Activated CD4-positive, alpha-beta T cell treated with anti-CD3 and anti-CD28 coated beads for 36 hours (primary cell): ENCODE measurements at regions of chr1 and their contacts with region 1.

Region 1: DNA sequence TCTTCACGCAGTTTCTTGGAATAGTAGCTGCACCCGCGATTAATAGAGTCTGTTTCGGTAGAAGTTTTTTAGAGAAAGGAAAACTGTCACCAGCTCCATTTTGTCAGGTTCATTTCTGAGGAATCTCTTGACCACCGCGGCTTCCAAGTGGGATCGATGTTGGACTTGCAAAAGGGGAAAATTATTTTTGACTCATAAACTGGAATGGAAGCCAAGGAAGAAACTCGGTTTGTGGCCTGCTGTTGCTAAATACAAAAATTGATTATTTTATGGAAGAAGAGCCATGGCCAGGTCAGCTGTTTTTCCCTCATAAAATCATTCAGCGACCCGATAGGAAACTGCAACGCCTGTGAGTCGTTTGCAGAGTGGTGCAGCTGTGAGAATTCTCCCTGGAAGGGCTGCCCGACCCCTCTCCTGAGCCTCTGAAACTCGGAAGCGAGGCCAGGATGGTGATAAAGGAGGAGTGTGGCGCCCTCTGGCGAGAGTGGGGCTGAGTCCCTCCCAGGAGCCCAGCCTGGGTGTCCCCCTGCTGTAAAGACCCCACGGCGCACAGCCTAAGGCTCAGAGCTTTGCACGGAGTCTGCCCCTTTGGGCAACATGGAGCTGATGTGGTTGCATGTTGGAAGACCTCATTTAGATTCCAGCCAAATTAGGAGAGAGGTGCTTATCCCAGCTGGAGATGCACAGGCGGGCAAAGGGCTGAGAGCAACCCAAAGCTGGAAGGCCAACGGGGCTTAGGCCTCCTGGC is 83.6 kb upstream of the SLC25A33 start:
- DNase-seq: peak; percentile 84
- ATAC-seq: peak; percentile 80
- H3K4me3 Mint-ChIP-seq: no peak overlapping the region
- H3K27ac Mint-ChIP-seq: no peak overlapping the region
- H3K4me1 Mint-ChIP-seq: no peaks in the 10 kb centered on the region
- H3K27me3 Mint-ChIP-seq: no peaks in the 10 kb centered on the region

Region 2: GRCh38 chr1:9269078-9269501 is 186.6 kb before region 1 on chr1:
- CTCF ChIA-PET with region 1: interaction called, 13 read pairs
- POLR2A ChIA-PET with region 1: no interaction called
- intact Hi-C with region 1: loop called (anchors 1 kb)
- DNase-seq: no peak
- ATAC-seq: no peak
- H3K4me3 Mint-ChIP-seq: no peak overlapping the region
- H3K27ac Mint-ChIP-seq: no peak overlapping the region
- H3K4me1 Mint-ChIP-seq: peaks cover 2% of the 10 kb centered on the region
- H3K27me3 Mint-ChIP-seq: no peaks in the 10 kb centered on the region

Region 3: DNA sequence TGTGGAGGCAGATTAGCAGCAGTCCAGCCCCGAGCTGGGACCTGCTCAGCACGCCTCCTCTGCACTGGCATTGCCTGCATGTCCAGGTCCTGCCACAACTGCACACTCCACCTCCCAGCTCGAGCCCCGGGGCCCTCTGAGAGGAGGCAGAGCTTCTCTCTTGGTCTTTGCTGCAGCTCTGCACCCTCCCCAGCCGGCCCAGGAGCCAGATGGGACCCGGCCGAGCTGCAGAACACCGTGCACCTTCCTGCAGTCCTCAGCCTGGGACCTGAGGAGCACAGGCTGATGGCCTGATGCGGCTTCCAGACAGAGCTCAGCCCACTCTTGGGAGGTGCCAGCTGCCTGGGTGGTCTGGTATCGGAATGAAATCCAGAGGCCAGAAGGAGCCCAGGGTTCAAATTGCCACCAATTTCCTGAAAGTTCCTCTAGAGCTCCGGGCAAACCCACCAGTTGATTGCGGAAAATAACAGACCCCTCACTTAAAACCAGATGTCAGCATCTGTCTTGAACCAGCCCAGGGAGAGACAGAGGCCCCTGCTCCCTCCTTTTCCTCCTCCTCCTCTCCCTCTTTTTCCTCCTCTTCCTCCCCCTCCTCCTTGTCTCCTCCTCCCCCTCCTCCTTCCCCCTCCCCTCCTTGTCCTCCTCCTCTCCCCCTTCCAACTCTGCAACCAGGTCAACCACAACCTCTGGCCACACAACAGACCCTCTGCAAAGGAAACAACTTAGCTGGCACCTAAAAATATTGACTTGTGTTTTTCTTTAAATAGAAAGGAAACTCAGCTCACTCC is 173.6 kb before region 1 on chr1:
- CTCF ChIA-PET with region 1: interaction called, 11 read pairs
- POLR2A ChIA-PET with region 1: no interaction called
- intact Hi-C with region 1: no loop called
- DNase-seq: peak; percentile 27
- ATAC-seq: no peak
- H3K4me3 Mint-ChIP-seq: no peak overlapping the region
- H3K27ac Mint-ChIP-seq: no peak overlapping the region
- H3K4me1 Mint-ChIP-seq: peaks cover 43% of the 10 kb centered on the region
- H3K27me3 Mint-ChIP-seq: no peaks in the 10 kb centered on the region

Region 4: DNA sequence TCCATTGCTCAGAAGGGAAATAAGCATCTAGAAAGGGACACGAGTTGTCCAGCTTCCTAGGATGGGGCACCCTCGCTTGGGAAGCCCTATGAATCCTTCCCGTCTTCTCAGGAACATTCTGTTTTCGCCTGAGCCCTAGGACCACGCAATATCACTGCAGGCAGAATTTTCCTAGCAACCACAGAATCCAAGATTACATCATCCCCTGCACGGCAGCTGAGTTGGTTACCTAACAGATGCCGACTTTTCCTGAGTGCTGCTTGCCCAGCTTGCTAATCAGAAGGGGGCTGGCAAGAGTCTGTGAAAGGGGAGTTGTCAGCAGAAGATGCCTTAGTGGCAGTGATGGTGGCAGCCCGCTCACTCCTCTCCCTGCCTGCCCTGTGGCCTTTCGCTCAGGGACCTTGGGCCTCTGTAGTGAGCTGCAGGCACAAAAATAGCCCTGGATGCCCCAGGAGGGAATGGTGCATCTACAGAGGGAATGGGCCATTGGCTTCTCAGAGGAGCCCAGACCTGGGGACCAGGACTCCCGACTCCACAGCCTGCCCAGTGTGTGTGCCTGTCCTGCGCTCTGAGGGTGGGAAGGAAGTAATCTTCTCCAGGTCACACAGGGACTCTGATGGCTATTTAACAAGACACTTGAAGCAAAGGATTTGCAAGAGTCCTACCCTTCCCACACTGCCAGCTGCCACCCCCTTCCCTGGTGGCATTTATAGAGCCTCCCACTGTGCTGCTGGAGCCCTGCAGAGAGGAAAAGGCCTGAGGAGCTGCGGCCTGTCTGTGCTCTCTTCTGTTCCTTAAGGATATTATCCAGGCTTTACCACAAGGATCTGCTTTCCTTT is 397.0 kb after region 1 on chr1:
- CTCF ChIA-PET with region 1: no interaction called
- POLR2A ChIA-PET with region 1: no interaction called
- intact Hi-C with region 1: no loop called
- DNase-seq: no peak
- ATAC-seq: no peak
- H3K4me3 Mint-ChIP-seq: no peak overlapping the region
- H3K27ac Mint-ChIP-seq: no peak overlapping the region
- H3K4me1 Mint-ChIP-seq: peaks cover 5% of the 10 kb centered on the region
- H3K27me3 Mint-ChIP-seq: no peaks in the 10 kb centered on the region